WTC11 (cell line): ENCODE measurements at regions of chr16 and their contacts with region 1.

Region 1: GRCh38 chr16:20336955-20337354 is 9.6 kb upstream of the GP2 start:
- DNase-seq: no peak
- ATAC-seq: peak; percentile 28; the same call in 1 of the 2 replicates
- H3K4me3 Mint-ChIP-seq: no peak overlapping the region
- H3K27ac Mint-ChIP-seq: no peak overlapping the region
- H3K4me1 Mint-ChIP-seq: peaks cover 18% of the 10 kb centered on the region
- H3K27me3 Mint-ChIP-seq: no peaks in the 10 kb centered on the region
- CTCF ChIP-seq: no peak

Region 2: GRCh38 chr16:20348365-20349185 is 11.6 kb after region 1 on chr16:
- CTCF ChIA-PET with region 1: interaction called, 15 read pairs
- POLR2A ChIA-PET with region 1: no interaction called
- DNase-seq: peak; percentile 86
- ATAC-seq: peak; percentile 95
- H3K4me3 Mint-ChIP-seq: no peak overlapping the region
- H3K27ac Mint-ChIP-seq: no peak overlapping the region
- H3K4me1 Mint-ChIP-seq: peaks cover 11% of the 10 kb centered on the region
- H3K27me3 Mint-ChIP-seq: no peaks in the 10 kb centered on the region
- CTCF ChIP-seq: peak; percentile 63; the same call in 1 of the 2 replicates